ENCODE measurements at regions of chr14 and their contacts with region 1.

Region 1: DNA sequence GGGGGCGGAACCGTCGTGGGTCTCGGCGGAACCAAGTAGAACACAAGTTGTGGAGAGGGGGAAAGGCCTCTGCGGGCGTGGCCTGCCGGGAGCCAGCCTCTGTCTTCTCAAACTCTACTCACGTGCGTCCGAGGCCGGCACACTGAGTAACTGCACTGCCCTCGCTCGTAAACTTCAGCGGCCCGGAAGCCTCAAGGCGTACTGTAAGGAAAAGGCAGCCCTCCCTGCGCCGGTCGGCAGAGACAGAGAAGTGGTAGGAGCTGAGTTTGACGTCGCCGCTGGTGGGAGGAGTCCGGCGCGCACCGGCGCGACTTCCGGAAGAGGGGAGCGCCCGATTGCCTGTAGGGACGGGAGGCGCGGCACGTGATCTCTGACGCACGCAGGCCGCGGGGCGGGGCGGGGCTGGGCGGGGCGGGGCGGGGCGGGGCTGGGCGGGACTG is at the start of gene FBXO33:
- DNase-seq: peak; percentile 93 to 96
- ATAC-seq: peak; percentile 87 to 89
- H3K4me3 ChIP-seq: peak within 1 kb of the TSS; percentile 83 to 94 (median 94)
- H3K27ac ChIP-seq: peak within 1 kb of the TSS; percentile 96 to 99 (median 97)
- H3K4me1 ChIP-seq: peaks cover 35 to 37% of the 10 kb centered on the region in 2 donors
- H3K27me3 ChIP-seq: no peaks in the 10 kb centered on the region
- CTCF ChIP-seq: no peak
- POLR2A ChIP-seq: no peak
- total RNA-seq, gene FBXO33: 5.3 to 8.0 (median 5.9) TPM

Region 2: GRCh38 chr14:39102969-39103957 is 328.9 kb before region 1 on chr14 and contains the start of gene SEC23A:
- in situ Hi-C with region 1: no loop called
- intact Hi-C with region 1: loop called (anchors 2 kb)
- DNase-seq: peak; percentile 79 to 90
- ATAC-seq: peak; percentile 93 to 94
- H3K4me3 ChIP-seq: peak within 1 kb of the TSS; percentile 69 to 88 (median 77)
- H3K27ac ChIP-seq: peak within 1 kb of the TSS; percentile 84 to 97 (median 95)
- H3K4me1 ChIP-seq: peaks cover 6 to 23% of the 10 kb centered on the region in 2 donors
- H3K27me3 ChIP-seq: no peaks in the 10 kb centered on the region
- CTCF ChIP-seq: no peak
- POLR2A ChIP-seq: peak; percentile 84
- total RNA-seq, gene SEC23A: 79.9 to 183 (median 93.9) TPM

Region 3: DNA sequence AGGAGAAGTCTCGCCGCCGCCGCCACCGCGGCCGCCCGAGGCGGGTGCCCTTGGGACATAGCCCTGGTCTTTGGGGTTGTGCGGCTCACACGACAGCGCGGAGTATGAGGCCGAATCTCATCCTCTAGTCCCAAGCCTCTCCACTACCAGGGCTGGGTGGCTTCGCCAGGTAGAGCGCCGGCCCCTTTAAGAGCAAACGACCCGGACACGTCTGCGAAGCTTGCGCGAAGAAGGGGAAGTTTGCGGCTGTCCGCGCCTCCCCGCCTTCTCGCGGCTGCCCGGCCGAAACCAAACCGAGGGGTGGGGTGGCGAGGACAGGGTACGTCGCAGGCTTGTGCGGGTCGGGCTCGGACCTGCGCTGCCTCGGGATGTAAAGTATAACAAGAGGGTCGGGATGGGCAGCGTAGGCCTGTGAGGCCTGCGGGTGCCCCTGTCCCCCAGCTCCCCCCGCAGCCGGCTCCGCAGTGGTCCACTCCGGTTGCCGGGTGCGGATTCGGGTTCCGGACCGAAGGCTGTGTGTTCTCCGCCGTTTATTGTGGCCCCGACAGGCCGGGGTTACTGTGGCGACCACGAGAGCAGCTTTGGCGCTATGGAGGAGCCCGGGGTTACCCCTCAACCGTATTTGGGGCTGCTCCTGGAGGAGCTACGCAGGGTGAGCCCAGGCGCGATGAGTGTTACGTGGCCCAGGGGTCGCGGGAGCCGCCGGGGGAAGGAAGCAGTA is 165.2 kb before region 1 on chr14:
- in situ Hi-C with region 1: loop called in 1 of 4 experiments (anchors 25 kb)
- intact Hi-C with region 1: loop called (anchors 1 kb)
- DNase-seq: peak; percentile 71 to 82
- ATAC-seq: peak; percentile 83 to 88
- H3K4me3 ChIP-seq: peak overlapping the region; percentile 77 to 97 (median 91)
- H3K27ac ChIP-seq: peak overlapping the region; percentile 95 to 99 (median 98)
- H3K4me1 ChIP-seq: peaks cover 27 to 33% of the 10 kb centered on the region in 2 donors
- H3K27me3 ChIP-seq: no peaks in the 10 kb centered on the region
- CTCF ChIP-seq: peak in 2 of 5 experiments; percentile 17 to 26
- POLR2A ChIP-seq: peak; percentile 70 to 77

Region 4: GRCh38 chr14:39376667-39377403 is 55.4 kb before region 1 on chr14:
- in situ Hi-C with region 1: no loop called
- intact Hi-C with region 1: loop called (anchors 5 kb)
- DNase-seq: no peak
- ATAC-seq: peak; percentile 80 to 83
- H3K4me3 ChIP-seq: peak overlapping the region; percentile 8 to 27 (median 25)
- H3K27ac ChIP-seq: peak overlapping the region; percentile 73 to 86 (median 80)
- H3K4me1 ChIP-seq: peaks cover 13 to 20% of the 10 kb centered on the region in 2 donors
- H3K27me3 ChIP-seq: no peaks in the 10 kb centered on the region
- CTCF ChIP-seq: no peak
- POLR2A ChIP-seq: no peak

Measured in gastrocnemius medialis (tissue), 4 donors.